ENCODE measurements at regions of chr10 and their contacts with region 1.

Region 1: GRCh38 chr10:96831867-96832720 is at the start of gene LCOR:
- DNase-seq: peak; percentile 96
- H3K4me3 ChIP-seq: peak within 1 kb of the TSS; percentile 82 to 100 (median 92)
- H3K27ac ChIP-seq: peak within 1 kb of the TSS; percentile 94 to 98 (median 96)
- H3K4me1 ChIP-seq: peaks cover 36 to 52% (median 49%) of the 10 kb centered on the region in 4 donors
- H3K27me3 ChIP-seq: no peaks in the 10 kb centered on the region
- CTCF ChIP-seq: peak in 1 of 3 experiments; percentile 21
- EP300 ChIP-seq: no peak
- POLR2A ChIP-seq: peak; percentile 44
- total RNA-seq, gene LCOR: 23.1 to 43.2 (median 29.4) TPM

Region 2: GRCh38 chr10:96374985-96375830 is 456.9 kb before region 1 on chr10:
- intact Hi-C with region 1: loop called (anchors 5 kb)
- DNase-seq: peak; percentile 94
- H3K4me3 ChIP-seq: peak overlapping the region; percentile 49 to 60 (median 50)
- H3K27ac ChIP-seq: no peak overlapping the region
- H3K4me1 ChIP-seq: peaks cover 7 to 34% (median 32%) of the 10 kb centered on the region in 4 donors
- H3K27me3 ChIP-seq: no peaks in the 10 kb centered on the region
- CTCF ChIP-seq: peak in 2 of 3 experiments; percentile 97
- EP300 ChIP-seq: no peak
- POLR2A ChIP-seq: no peak

Region 3: DNA sequence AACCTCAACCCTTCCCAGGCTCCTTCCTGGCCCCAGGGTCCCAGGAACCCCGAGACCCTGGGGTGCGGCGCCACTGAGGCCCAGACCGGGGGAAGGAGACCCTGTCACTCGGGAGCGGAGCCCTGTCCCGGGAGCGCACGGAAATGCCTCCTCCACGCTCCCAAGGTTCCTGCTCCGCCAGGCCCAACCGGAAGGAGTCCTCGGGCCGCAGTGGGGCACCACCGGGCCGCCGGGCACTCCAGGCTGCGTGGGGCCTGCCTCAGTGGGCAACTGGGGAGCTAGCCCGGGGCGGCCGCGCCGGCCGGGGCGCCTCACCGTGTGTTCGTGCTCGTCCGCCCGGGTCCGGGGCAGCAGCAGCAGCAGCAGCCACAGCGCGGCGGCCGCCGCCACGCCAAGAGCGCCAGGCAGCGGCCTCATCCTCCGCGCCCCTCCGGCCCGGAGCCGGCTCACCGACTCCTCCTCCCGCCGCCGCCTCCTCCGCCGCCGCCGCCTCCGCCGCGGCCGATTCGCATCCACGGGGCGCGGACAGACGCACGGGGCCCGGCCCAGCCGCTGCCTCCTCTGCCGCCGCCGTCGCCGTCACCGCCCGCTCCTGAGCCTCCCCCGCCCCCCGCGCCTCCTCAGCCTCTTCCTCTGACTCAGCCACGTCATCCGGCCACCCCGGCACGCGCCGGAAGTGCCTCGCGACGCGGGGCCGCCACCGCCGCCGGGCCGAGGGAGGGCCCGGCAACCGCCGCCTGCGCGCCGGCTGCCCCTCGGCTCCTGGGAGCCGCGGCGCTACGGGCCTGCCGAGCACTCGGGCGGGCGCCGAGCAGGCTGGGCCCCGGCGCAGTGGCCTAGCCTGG is 245.5 kb before region 1 on chr10 and contains the start of gene TM9SF3:
- intact Hi-C with region 1: loop called (anchors 10 kb)
- DNase-seq: peak; percentile 98
- H3K4me3 ChIP-seq: peak within 1 kb of the TSS; percentile 90 to 98 (median 96)
- H3K27ac ChIP-seq: peak within 1 kb of the TSS; percentile 97 to 100 (median 98)
- H3K4me1 ChIP-seq: peaks cover 44 to 62% (median 54%) of the 10 kb centered on the region in 4 donors
- H3K27me3 ChIP-seq: no peaks in the 10 kb centered on the region
- CTCF ChIP-seq: peak in 2 of 3 experiments; percentile 3 to 19
- EP300 ChIP-seq: no peak
- POLR2A ChIP-seq: no peak
- total RNA-seq, gene TM9SF3: 72.0 to 110 (median 90.5) TPM

Region 4: GRCh38 chr10:96765406-96766240 is 66.5 kb before region 1 on chr10:
- intact Hi-C with region 1: loop called (anchors 2 kb)
- DNase-seq: no peak
- H3K4me3 ChIP-seq: no peak overlapping the region
- H3K27ac ChIP-seq: no peak overlapping the region
- H3K4me1 ChIP-seq: no peaks in the 10 kb centered on the region
- H3K27me3 ChIP-seq: peaks cover 0 to 9% (median 0%) of the 10 kb centered on the region in 4 donors
- CTCF ChIP-seq: peak; percentile 71 to 85 (median 78)
- EP300 ChIP-seq: no peak
- POLR2A ChIP-seq: no peak

Region 5: GRCh38 chr10:97025613-97026242 is 193.6 kb after region 1 on chr10:
- intact Hi-C with region 1: loop called (anchors 10 kb)
- DNase-seq: no peak
- H3K4me3 ChIP-seq: no peak overlapping the region
- H3K27ac ChIP-seq: no peak overlapping the region
- H3K4me1 ChIP-seq: peaks cover 19 to 39% (median 33%) of the 10 kb centered on the region in 4 donors
- H3K27me3 ChIP-seq: no peaks in the 10 kb centered on the region
- CTCF ChIP-seq: peak; percentile 40 to 62 (median 51)
- EP300 ChIP-seq: no peak
- POLR2A ChIP-seq: no peak

Measured in esophagus muscularis mucosa (tissue), 4 donors.